Ascending aorta (tissue), 2 donors: ENCODE measurements at regions of chr21 and their contacts with region 1.

Region 1: DNA sequence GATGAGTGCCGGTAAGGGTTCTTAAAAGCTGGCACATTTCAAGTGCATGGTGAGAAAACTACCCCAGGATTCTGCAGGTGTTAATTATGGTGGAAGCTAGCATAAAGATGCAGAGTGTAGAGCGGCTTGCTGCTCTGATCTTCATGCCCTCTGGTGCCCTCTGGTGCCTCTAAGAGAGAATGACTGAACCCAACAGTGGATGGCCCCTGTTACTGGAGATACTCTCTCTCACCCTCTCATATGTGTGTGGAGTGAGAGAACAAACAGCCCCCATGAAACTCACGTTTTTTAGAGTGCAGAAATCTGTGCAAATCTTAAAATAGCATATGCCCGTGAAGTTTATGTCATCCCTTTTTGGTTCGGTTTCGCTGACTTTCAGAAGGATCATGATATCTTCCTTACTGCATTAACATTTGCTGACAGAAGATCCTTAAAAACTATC is 90.0 kb downstream of the GRIK1 start:
- DNase-seq: no peak
- H3K4me3 ChIP-seq: no peak overlapping the region
- H3K27ac ChIP-seq: no peak overlapping the region
- H3K4me1 ChIP-seq: no peaks in the 10 kb centered on the region
- H3K27me3 ChIP-seq: no peaks in the 10 kb centered on the region
- CTCF ChIP-seq: peak; percentile 38 to 64 (median 53)

Region 2: DNA sequence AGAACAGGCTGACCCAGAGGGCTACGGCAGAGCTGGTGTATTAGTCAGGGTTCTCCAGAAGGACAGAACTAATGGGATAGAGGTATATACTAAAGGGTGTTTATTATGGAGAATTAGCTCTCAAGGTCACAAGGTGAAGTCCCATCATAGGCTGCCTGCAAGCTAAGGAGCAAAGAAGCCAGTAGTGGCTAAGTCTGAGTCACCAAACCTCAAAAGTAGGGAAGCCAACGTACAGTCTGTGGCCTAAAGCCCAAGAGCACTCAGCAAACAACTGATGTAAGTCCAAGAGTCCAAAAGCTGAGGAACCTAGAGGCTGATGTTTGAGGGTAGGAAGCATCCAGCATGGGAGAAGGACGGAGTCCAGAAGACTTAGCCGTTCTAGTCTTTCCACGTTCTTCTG is 371.8 kb before region 1 on chr21:
- intact Hi-C with region 1: loop called (anchors 2 kb)
- DNase-seq: no peak
- H3K4me3 ChIP-seq: no peak overlapping the region
- H3K27ac ChIP-seq: no peak overlapping the region
- H3K4me1 ChIP-seq: no peaks in the 10 kb centered on the region
- H3K27me3 ChIP-seq: no peaks in the 10 kb centered on the region
- CTCF ChIP-seq: no peak

Region 3: GRCh38 chr21:29829564-29830275 is 20.0 kb before region 1 on chr21:
- intact Hi-C with region 1: no loop called
- DNase-seq: no peak
- H3K4me3 ChIP-seq: no peak overlapping the region
- H3K27ac ChIP-seq: no peak overlapping the region
- H3K4me1 ChIP-seq: no peaks in the 10 kb centered on the region
- H3K27me3 ChIP-seq: no peaks in the 10 kb centered on the region
- CTCF ChIP-seq: no peak